ENCODE measurements at regions of chr9 and their contacts with region 1.

Region 1: DNA sequence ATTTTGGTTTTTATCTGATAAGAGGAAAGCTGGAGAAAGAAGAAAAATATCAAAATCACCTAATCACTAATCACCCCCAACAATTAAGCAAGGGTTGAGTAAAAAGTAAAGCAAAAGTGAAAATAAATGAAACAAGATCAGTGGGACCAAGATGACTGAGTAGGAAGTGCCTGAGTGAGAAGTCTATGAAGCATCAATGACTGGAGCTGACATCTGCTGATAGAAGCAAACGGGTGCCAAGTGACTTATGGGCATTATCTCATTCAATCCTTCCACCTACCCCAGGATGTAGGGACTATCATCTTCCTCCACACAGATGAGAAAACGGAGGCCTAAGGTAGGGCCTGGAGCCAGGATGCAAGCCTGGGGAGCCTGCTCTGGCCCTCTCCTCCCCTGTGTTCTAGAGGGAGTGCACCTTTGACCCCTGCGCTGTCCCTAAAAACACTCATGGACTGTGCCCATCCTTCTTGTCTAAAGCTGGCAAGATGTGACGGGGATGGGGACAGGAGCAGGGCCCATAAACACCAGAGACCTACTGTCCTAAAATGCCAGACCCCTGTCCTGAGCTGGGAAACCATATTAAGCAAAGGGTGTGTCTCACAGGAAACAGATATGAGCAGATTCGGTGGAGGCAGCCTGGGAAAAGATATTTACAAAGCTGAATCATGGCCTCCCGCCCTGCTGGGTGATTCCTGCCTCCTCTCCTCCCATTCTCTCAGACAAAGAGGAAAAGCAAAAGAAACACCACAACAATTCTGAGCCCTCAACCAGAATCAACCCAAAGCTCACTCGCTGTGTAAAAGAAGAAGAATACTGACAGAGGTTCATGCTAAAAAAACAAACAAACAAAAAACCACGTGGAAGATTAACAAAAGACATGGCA is 116.0 kb downstream of the AUH start:
- DNase-seq: no peak
- ATAC-seq: peak; percentile 47
- H3K4me3 ChIP-seq: no peak overlapping the region
- H3K4me3 Mint-ChIP-seq: peak overlapping the region in 1 of 10 donors; percentile 66
- H3K27ac ChIP-seq: no peak overlapping the region
- H3K27ac Mint-ChIP-seq: peak overlapping the region in 3 of 9 donors; percentile 11 to 85 (median 42)
- H3K4me1 ChIP-seq: no peaks in the 10 kb centered on the region
- H3K4me1 Mint-ChIP-seq: peaks cover 6 to 41% (median 16%) of the 10 kb centered on the region in 7 donors
- H3K27me3 ChIP-seq: no peaks in the 10 kb centered on the region
- H3K27me3 Mint-ChIP-seq: no peaks in the 10 kb centered on the region

Region 2: GRCh38 chr9:91207729-91208418 is 37.8 kb before region 1 on chr9:
- CTCF ChIA-PET with region 1: no interaction called
- POLR2A ChIA-PET with region 1: no interaction called
- intact Hi-C with region 1: loop called in 1 of 2 experiments (anchors 2 kb)
- DNase-seq: peak in 5 of 9 donors; percentile 13 to 24 (median 21)
- ATAC-seq: peak; percentile 74
- H3K4me3 ChIP-seq: peak overlapping the region; percentile 4
- H3K4me3 Mint-ChIP-seq: peak overlapping the region; percentile 49 to 89 (median 80)
- H3K27ac ChIP-seq: peak overlapping the region; percentile 31
- H3K27ac Mint-ChIP-seq: peak overlapping the region; percentile 52 to 91 (median 83)
- H3K4me1 ChIP-seq: peaks cover 17 to 18% of the 10 kb centered on the region in 2 donors
- H3K4me1 Mint-ChIP-seq: peaks cover 13 to 61% (median 37%) of the 10 kb centered on the region in 7 donors
- H3K27me3 ChIP-seq: no peaks in the 10 kb centered on the region
- H3K27me3 Mint-ChIP-seq: no peaks in the 10 kb centered on the region

Region 3: DNA sequence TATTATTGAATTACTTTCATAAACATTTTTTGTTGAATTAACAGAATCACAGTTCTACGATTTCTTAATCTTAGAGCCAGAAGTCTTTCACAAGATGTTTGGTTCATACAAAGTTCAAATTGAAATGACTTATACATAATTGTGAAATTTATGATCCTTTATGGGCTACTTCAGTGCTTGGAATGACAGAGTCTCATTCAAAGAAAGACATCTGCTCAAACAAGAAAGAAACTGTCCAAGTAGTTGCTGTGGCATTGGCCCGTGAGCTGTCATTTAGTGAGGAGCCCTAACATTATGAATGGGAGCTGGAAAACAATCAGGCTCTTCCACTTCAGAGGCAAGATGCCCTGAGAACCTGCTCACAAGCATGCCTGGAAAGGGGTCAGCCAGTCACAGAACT is 52.6 kb after region 1 on chr9:
- CTCF ChIA-PET with region 1: no interaction called
- POLR2A ChIA-PET with region 1: no interaction called
- intact Hi-C with region 1: no loop called
- DNase-seq: no peak
- ATAC-seq: peak; percentile 57
- H3K4me3 ChIP-seq: no peak overlapping the region
- H3K4me3 Mint-ChIP-seq: no peak overlapping the region
- H3K27ac ChIP-seq: no peak overlapping the region
- H3K27ac Mint-ChIP-seq: no peak overlapping the region
- H3K4me1 ChIP-seq: no peaks in the 10 kb centered on the region
- H3K4me1 Mint-ChIP-seq: peaks cover 4 to 14% (median 6%) of the 10 kb centered on the region in 7 donors
- H3K27me3 ChIP-seq: no peaks in the 10 kb centered on the region
- H3K27me3 Mint-ChIP-seq: no peaks in the 10 kb centered on the region

Measured in naive thymus-derived CD4-positive, alpha-beta T cell (primary cell).